HepG2 (cell line): ENCODE measurements at regions of chr4 and their contacts with region 1.

Region 1: DNA sequence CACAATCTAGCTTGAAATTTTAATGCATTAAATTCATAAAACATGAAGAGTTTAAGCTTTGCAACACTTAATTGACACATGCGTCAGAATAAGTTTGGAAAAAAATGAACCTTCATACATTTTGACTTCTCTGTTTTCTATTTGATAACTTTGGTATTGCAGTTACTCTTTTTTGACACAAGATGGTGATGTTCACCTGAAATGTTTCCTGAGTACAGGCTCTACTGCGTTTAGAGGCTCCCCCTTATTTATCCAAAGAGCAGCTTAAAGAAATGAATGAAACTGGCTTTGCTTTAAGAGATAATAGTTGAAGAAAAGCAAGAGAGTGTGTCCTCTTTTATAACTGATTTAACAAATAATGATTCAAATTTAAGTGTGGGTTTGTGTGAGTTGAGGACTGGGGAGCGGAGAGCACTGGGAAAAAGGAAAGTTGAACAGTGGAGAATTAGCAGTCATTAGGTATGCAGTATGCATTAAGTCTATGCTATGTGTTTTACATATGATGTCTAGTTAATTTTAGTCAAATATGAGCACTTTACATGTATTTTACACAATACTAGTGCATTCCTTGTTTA is 180.6 kb upstream of the NUDT6 start:
- DNase-seq: peak; percentile 49
- ATAC-seq: peak; percentile 77
- H3K4me3 ChIP-seq: no peak overlapping the region
- H3K27ac ChIP-seq: no peak overlapping the region
- H3K4me1 ChIP-seq: no peaks in the 10 kb centered on the region
- H3K27me3 ChIP-seq: no peaks in the 10 kb centered on the region
- CTCF ChIP-seq: peak; percentile 69
- EP300 ChIP-seq: no peak
- POLR2A ChIP-seq: no peak
- RAD21 ChIP-seq: peak; percentile 69; the same call in 1 of the 2 replicates

Region 2: DNA sequence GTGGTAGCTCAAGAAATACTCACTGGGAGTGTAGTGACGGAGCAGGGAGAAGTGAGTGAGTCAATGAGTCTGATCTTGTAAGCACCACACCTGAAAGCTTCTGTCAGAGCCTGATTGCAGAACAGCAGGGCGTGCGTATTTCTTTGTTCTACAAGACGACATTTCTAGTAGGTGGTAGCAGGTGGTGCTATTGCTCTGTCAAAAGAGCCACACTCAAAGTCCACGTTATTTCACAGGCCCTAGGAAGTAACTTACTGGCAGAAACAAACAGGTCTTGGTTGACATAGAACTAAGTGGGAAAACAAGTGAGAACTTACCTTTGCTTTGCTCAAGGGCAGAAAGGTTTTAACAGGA is 247.2 kb after region 1 on chr4:
- CTCF ChIA-PET with region 1: no interaction called
- POLR2A ChIA-PET with region 1: no interaction called
- in situ Hi-C with region 1: no loop called
- intact Hi-C with region 1: loop called (anchors 2 kb)
- DNase-seq: peak; percentile 81
- ATAC-seq: peak; percentile 91
- H3K4me3 ChIP-seq: peak overlapping the region in 1 of 3 experiments; percentile 15; a peak in 1 of 6 replicates
- H3K27ac ChIP-seq: no peak overlapping the region
- H3K4me1 ChIP-seq: peaks cover 48% of the 10 kb centered on the region
- H3K27me3 ChIP-seq: no peaks in the 10 kb centered on the region
- CTCF ChIP-seq: peak; percentile 78
- EP300 ChIP-seq: 0 out of 4 replicates have a peak, but pooled peaks of 1 of the 2 experiments have one; percentile 33
- POLR2A ChIP-seq: no peak
- RAD21 ChIP-seq: peak; percentile 47

Region 3: DNA sequence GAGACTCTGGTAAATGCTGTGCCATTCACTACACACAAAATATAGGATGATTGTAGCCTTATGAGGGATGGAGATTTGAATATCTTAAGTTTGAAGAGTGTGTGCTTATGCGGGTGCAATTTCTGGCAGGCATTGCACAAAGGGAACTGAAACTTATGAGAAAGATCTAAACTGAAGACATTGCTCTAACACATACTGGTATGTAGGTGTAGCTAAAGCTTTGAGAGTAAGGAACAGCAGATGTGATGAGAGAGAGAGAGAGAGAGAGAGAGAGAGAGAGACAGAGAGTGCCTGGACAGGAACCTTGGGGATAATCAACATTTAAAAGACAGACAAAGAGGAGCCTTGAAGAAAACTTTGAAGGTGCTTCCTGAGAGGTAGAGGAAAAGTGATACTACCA is 673.3 kb after region 1 on chr4:
- CTCF ChIA-PET with region 1: interaction called, 7 read pairs
- POLR2A ChIA-PET with region 1: no interaction called
- in situ Hi-C with region 1: no loop called
- intact Hi-C with region 1: loop called (anchors 10 kb)
- DNase-seq: no peak
- ATAC-seq: no peak
- H3K4me3 ChIP-seq: no peak overlapping the region
- H3K27ac ChIP-seq: no peak overlapping the region
- H3K4me1 ChIP-seq: no peaks in the 10 kb centered on the region
- H3K27me3 ChIP-seq: no peaks in the 10 kb centered on the region
- CTCF ChIP-seq: no peak
- EP300 ChIP-seq: no peak
- POLR2A ChIP-seq: no peak
- RAD21 ChIP-seq: no peak

Region 4: GRCh38 chr4:123995936-123996335 is 893.0 kb after region 1 on chr4:
- CTCF ChIA-PET with region 1: no interaction called
- POLR2A ChIA-PET with region 1: no interaction called
- in situ Hi-C with region 1: no loop called
- intact Hi-C with region 1: loop called (anchors 10 kb)
- DNase-seq: no peak
- ATAC-seq: no peak
- H3K4me3 ChIP-seq: no peak overlapping the region
- H3K27ac ChIP-seq: no peak overlapping the region
- H3K4me1 ChIP-seq: no peaks in the 10 kb centered on the region
- H3K27me3 ChIP-seq: no peaks in the 10 kb centered on the region
- CTCF ChIP-seq: no peak
- EP300 ChIP-seq: no peak
- POLR2A ChIP-seq: no peak
- RAD21 ChIP-seq: no peak